CD8-positive, alpha-beta T cell (primary cell): ENCODE measurements at regions of chr7 and their contacts with region 1.

Region 1: GRCh38 chr7:32891800-32892520 is 400 bp upstream of the KBTBD2 start:
- DNase-seq: peak; percentile 92 to 99 (median 97)
- ATAC-seq: peak; percentile 61
- H3K4me3 ChIP-seq: peak overlapping the region; percentile 72 to 83
- H3K4me3 Mint-ChIP-seq: peak overlapping the region; percentile 92
- H3K27ac ChIP-seq: peak overlapping the region; percentile 95 to 100
- H3K27ac Mint-ChIP-seq: peak overlapping the region; percentile 99
- H3K4me1 ChIP-seq: peaks cover 42% of the 10 kb centered on the region
- H3K4me1 Mint-ChIP-seq: peaks cover 48% of the 10 kb centered on the region
- H3K27me3 ChIP-seq: no peaks in the 10 kb centered on the region
- H3K27me3 Mint-ChIP-seq: no peaks in the 10 kb centered on the region
- CTCF ChIP-seq: no peak

Region 2: GRCh38 chr7:32490127-32490822 is 401.7 kb before region 1 on chr7 and contains the start of gene LSM5:
- CTCF ChIA-PET with region 1: no interaction called
- POLR2A ChIA-PET with region 1: interaction called, 7 read pairs
- intact Hi-C with region 1: loop called (anchors 2 kb)
- DNase-seq: peak; percentile 78 to 96 (median 89)
- ATAC-seq: peak; percentile 60
- H3K4me3 ChIP-seq: peak within 1 kb of the TSS; percentile 75 to 79
- H3K4me3 Mint-ChIP-seq: peak within 1 kb of the TSS; percentile 86
- H3K27ac ChIP-seq: peak within 1 kb of the TSS; percentile 85
- H3K27ac Mint-ChIP-seq: peak within 1 kb of the TSS; percentile 98
- H3K4me1 ChIP-seq: peaks cover 19% of the 10 kb centered on the region
- H3K4me1 Mint-ChIP-seq: peaks cover 29% of the 10 kb centered on the region
- H3K27me3 ChIP-seq: no peaks in the 10 kb centered on the region
- H3K27me3 Mint-ChIP-seq: no peaks in the 10 kb centered on the region
- CTCF ChIP-seq: no peak
- total RNA-seq, gene LSM5: 32.1 to 38.6 TPM

Region 3: DNA sequence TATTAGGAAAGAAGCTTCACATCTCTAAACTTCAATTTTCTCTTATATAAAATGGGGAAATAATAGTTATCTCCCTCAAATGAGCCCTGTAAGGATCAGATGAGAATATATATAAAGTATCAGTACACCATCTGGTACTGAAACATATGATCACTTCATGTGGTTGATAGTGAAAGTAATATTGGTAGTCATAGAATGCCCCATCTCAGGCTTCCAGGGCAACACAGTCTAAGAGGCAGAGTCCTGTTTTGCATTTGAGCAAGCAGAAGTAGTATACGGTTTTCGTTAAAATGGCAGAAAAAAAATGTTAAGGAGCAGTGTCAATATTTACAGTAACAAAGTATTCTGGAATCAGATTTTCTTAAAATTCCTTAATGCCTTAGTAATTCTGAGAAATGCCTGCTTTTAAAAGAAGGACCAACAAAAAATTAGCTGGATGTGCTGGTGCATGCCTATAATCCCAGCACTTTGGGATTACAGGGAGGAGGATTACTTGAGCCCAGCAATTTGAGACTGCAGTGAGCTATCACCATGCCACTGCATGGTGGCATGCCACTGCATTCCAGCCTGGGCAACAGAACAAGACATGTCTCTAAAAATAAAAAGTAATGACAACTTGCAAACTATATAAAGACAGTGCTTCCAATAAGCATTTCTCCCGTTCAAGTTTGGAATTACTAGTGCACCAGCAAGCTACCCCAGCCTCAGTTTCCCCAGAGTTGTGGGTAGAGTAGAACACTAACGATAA is 20.2 kb before region 1 on chr7:
- CTCF ChIA-PET with region 1: interaction called, 6 read pairs
- POLR2A ChIA-PET with region 1: interaction called, 27 read pairs
- intact Hi-C with region 1: loop called (anchors 2 kb)
- DNase-seq: no peak
- ATAC-seq: no peak
- H3K4me3 ChIP-seq: no peak overlapping the region
- H3K4me3 Mint-ChIP-seq: no peak overlapping the region
- H3K27ac ChIP-seq: no peak overlapping the region
- H3K27ac Mint-ChIP-seq: no peak overlapping the region
- H3K4me1 ChIP-seq: peaks cover 9% of the 10 kb centered on the region
- H3K4me1 Mint-ChIP-seq: peaks cover 23% of the 10 kb centered on the region
- H3K27me3 ChIP-seq: no peaks in the 10 kb centered on the region
- H3K27me3 Mint-ChIP-seq: no peaks in the 10 kb centered on the region
- CTCF ChIP-seq: no peak

Region 4: DNA sequence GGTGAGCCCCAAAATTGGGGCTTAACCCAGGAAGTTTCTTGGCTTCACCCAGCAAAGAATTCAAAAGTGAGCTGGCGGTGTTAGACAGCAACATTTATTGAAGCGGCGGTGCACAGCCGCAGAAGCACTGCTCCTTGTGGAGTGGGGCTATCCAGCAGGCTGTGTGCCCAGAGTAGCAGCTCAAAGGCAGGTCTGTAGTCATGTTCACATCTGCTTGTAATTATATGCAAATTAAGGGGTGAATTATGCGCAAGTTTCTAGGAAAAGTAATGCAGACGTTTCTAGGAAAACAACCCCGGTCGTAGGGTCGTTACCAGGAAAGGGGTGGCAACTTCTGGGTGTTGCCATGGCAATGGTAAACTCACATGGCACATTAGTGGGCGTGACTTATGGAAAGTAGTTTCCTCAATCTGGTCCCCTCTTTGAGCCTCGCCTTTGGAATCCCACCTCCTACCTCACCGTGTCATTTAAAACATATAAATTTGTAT is 13.3 kb after region 1 on chr7:
- CTCF ChIA-PET with region 1: interaction called, 9 read pairs
- POLR2A ChIA-PET with region 1: interaction called, 36 read pairs
- intact Hi-C with region 1: loop called in 1 of 2 experiments (anchors 1 kb)
- DNase-seq: peak; percentile 37 to 92 (median 66)
- ATAC-seq: peak; percentile 83
- H3K4me3 ChIP-seq: peak overlapping the region; percentile 28 to 42
- H3K4me3 Mint-ChIP-seq: peak overlapping the region; percentile 81
- H3K27ac ChIP-seq: peak overlapping the region; percentile 72 to 73
- H3K27ac Mint-ChIP-seq: peak overlapping the region; percentile 91
- H3K4me1 ChIP-seq: peaks cover 13% of the 10 kb centered on the region
- H3K4me1 Mint-ChIP-seq: peaks cover 13% of the 10 kb centered on the region
- H3K27me3 ChIP-seq: no peaks in the 10 kb centered on the region
- H3K27me3 Mint-ChIP-seq: no peaks in the 10 kb centered on the region
- CTCF ChIP-seq: no peak

Region 5: DNA sequence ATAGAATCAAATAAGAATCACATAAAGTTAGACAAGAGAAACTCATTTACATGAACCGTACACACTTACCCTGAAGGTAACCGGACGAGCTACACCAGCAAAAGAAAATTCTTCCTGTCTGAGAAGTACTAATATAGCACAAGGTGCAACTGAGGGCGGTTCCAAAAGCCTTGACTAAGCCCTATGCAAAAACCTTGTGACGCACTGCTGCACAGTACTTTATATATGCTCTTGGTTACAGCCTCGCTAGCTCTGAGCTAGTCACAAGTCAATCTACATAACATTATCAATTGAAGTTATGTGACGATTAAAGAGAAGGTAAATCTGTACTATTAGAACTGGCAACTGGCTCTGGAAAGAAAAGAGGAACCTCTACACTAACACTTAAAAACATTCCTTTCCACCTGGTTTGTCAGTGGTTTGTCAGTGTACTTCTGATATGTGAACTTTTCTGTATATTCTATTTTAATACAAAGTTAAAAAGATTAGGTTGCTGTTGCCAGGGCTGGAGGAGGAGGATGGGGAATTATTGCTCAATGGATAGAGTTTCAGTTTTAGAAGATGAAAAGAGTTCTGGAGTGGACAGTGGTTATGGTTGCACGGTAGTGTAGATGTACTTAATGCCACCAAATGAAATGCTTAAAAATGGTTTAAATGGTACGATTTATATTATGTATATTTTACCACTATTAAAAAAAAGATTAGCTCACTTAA is 149.0 kb after region 1 on chr7:
- CTCF ChIA-PET with region 1: no interaction called
- POLR2A ChIA-PET with region 1: no interaction called
- intact Hi-C with region 1: loop called (anchors 5 kb)
- DNase-seq: peak; percentile 36 to 87 (median 63)
- ATAC-seq: peak; percentile 99
- H3K4me3 ChIP-seq: peak overlapping the region; percentile 3 to 23
- H3K4me3 Mint-ChIP-seq: peak overlapping the region; percentile 77
- H3K27ac ChIP-seq: peak overlapping the region; percentile 54 to 75
- H3K27ac Mint-ChIP-seq: peak overlapping the region; percentile 90
- H3K4me1 ChIP-seq: peaks cover 25% of the 10 kb centered on the region
- H3K4me1 Mint-ChIP-seq: peaks cover 61% of the 10 kb centered on the region
- H3K27me3 ChIP-seq: no peaks in the 10 kb centered on the region
- H3K27me3 Mint-ChIP-seq: no peaks in the 10 kb centered on the region
- CTCF ChIP-seq: no peak

Region 6: DNA sequence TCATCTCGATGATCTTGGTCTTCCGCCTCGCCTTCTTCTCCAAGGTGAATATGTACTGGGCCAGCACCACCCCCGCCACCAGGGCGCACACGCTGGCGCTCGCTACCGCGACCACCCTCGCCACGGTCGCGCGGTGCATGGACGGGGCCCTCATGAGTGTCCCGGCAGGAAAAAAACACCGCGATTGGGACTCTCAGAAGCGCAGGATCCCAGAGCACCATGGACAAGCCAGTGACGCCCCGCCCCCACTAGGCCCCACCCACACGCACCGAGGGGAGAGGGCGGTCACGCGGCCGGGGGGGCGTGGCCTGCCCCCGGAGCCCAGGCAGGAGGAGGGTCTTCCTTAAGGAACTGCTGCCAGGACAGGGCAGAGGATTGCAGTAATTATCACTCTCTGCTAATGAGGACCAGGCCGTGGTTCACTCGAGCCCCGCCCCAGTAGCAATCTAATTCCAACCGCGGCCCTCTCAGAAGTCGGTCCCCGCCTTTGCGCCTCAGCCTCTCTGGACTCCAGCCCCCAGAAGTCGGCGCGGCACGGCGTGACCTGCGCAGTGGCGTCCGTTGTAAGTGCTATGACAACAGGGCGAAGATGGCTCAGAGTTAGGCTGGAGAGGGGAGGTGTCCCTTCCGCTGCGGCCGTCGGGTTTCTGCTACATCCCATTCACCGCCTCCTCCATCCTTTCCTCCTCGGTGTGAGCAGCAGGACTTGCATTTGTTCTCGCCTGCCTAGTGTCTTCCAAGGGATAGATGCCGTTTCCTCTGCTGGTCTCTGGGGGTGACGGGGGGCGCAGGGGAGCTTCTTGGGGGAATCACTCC is 237.2 kb after region 1 on chr7 and contains the start of gene BBS9:
- CTCF ChIA-PET with region 1: no interaction called
- POLR2A ChIA-PET with region 1: no interaction called
- intact Hi-C with region 1: loop called (anchors 1 kb)
- DNase-seq: peak; percentile 80 to 94 (median 91)
- ATAC-seq: peak; percentile 95
- H3K4me3 ChIP-seq: peak within 1 kb of the TSS; percentile 85 to 88
- H3K4me3 Mint-ChIP-seq: peak within 1 kb of the TSS; percentile 96
- H3K27ac ChIP-seq: peak within 1 kb of the TSS; percentile 65 to 72
- H3K27ac Mint-ChIP-seq: peak within 1 kb of the TSS; percentile 91
- H3K4me1 ChIP-seq: peaks cover 14% of the 10 kb centered on the region
- H3K4me1 Mint-ChIP-seq: peaks cover 28% of the 10 kb centered on the region
- H3K27me3 ChIP-seq: no peaks in the 10 kb centered on the region
- H3K27me3 Mint-ChIP-seq: no peaks in the 10 kb centered on the region
- CTCF ChIP-seq: no peak
- total RNA-seq, gene BBS9: 15.7 to 16.7 TPM